HepG2 (cell line): ENCODE measurements at regions of chr11 and their contacts with region 1.

Region 1: GRCh38 chr11:65615229-65615941 is at the start of gene PCNX3:
- DNase-seq: peak; percentile 100
- ATAC-seq: peak; percentile 72
- H3K4me3 ChIP-seq: peak within 1 kb of the TSS; percentile 90 to 97 (median 94)
- H3K27ac ChIP-seq: peak within 1 kb of the TSS; percentile 92
- H3K4me1 ChIP-seq: peaks cover 41% of the 10 kb centered on the region
- H3K27me3 ChIP-seq: no peaks in the 10 kb centered on the region; a peak in 1 of 5 replicates
- CTCF ChIP-seq: 0 out of 2 replicates have a peak, but pooled peaks have one; percentile 9
- EP300 ChIP-seq: 0 out of 4 replicates have a peak, but pooled peaks of 1 of the 2 experiments have one; percentile 27
- POLR2A ChIP-seq: peak in 1 of 2 experiments; percentile 44; a peak in 2 of 4 replicates
- RAD21 ChIP-seq: no peak
- total RNA-seq, gene PCNX3: 14.5 and 23.0 TPM in 2 replicates

Region 2: DNA sequence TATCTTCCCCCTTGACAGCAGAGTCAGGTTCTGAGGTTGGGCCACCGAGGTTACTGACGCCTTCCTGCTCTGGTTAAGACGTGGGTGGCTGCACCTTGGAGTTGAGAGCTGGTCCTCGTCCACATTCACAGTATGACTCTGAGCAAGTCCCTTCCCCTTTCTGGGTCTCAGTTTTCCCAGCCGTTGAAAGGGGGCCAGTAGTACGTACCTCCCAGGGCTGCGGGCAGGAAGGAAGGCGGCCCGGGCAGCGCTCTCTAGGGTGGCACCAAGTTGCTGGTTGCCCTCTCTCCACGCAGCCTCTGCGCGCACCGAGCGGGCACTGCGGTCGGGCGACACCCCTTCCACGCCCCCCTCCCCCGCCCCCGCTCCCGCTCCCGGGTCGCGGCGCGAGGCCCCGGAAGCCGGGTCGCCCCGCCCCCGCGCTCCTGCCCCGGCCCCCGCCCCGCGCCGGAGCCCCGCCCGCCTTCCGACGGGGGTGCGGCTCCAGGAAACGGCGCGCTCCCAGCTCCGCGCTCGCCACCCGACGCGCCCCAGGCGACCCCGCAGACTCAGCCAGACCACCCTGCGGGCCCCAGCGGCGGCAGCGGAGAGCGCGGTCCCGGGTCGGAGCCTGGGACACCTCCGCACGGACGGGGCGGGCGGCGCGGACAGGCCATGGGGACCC is 39.7 kb before region 1 on chr11 and contains the start of gene EHBP1L1:
- CTCF ChIA-PET with region 1: no interaction called
- POLR2A ChIA-PET with region 1: interaction called, 9 read pairs
- in situ Hi-C with region 1: loop called (anchors 5 kb)
- intact Hi-C with region 1: no loop called
- DNase-seq: no peak
- ATAC-seq: peak; percentile 9
- H3K4me3 ChIP-seq: peak within 1 kb of the TSS; percentile 69 to 77 (median 73)
- H3K27ac ChIP-seq: no peak within 1 kb of the TSS
- H3K4me1 ChIP-seq: peaks cover 54% of the 10 kb centered on the region
- H3K27me3 ChIP-seq: no peaks in the 10 kb centered on the region; a peak in 1 of 5 replicates
- CTCF ChIP-seq: no peak
- EP300 ChIP-seq: no peak
- POLR2A ChIP-seq: no peak
- RAD21 ChIP-seq: no peak
- total RNA-seq, gene EHBP1L1: 5.4 and 10.6 TPM in 2 replicates

Region 3: GRCh38 chr11:65625628-65626342 is 10.4 kb after region 1 on chr11:
- CTCF ChIA-PET with region 1: no interaction called
- POLR2A ChIA-PET with region 1: interaction called, 19 read pairs
- in situ Hi-C with region 1: no loop called
- intact Hi-C with region 1: no loop called
- DNase-seq: no peak
- ATAC-seq: peak; percentile 71
- H3K4me3 ChIP-seq: no peak overlapping the region
- H3K27ac ChIP-seq: no peak overlapping the region
- H3K4me1 ChIP-seq: peaks cover 4% of the 10 kb centered on the region; the same call in 1 of the 2 replicates
- H3K27me3 ChIP-seq: no peaks in the 10 kb centered on the region
- CTCF ChIP-seq: peak; percentile 76
- EP300 ChIP-seq: no peak
- POLR2A ChIP-seq: no peak
- RAD21 ChIP-seq: peak; percentile 43; the same call in 1 of the 2 replicates

Region 4: DNA sequence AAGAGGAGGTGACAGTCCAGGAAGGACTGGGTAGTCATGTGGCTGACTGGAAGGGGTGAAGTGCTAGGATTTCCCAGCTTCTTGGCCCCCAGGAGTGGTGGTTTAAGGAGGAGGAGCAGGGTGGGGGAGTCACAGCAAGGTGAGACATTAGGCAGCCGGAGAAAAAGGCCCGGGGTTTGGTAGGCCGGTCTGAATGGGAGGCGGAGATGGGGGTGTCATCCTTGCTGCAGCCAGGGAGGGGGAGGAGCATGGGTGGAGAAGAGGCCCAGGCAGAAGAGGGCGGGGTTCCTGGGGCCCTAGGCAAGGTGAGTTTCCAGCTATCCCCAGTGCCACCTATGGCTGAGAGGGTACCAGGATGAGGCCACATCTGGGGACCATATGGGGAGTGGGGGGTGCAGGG is 28.6 kb after region 1 on chr11:
- CTCF ChIA-PET with region 1: no interaction called
- POLR2A ChIA-PET with region 1: interaction called, 44 read pairs
- in situ Hi-C with region 1: no loop called
- intact Hi-C with region 1: no loop called
- DNase-seq: no peak
- ATAC-seq: peak; percentile 6; the same call in 2 of the 3 replicates
- H3K4me3 ChIP-seq: no peak overlapping the region
- H3K27ac ChIP-seq: no peak overlapping the region
- H3K4me1 ChIP-seq: peaks cover 23% of the 10 kb centered on the region
- H3K27me3 ChIP-seq: no peaks in the 10 kb centered on the region
- CTCF ChIP-seq: no peak
- EP300 ChIP-seq: no peak
- POLR2A ChIP-seq: no peak
- RAD21 ChIP-seq: no peak

Region 5: DNA sequence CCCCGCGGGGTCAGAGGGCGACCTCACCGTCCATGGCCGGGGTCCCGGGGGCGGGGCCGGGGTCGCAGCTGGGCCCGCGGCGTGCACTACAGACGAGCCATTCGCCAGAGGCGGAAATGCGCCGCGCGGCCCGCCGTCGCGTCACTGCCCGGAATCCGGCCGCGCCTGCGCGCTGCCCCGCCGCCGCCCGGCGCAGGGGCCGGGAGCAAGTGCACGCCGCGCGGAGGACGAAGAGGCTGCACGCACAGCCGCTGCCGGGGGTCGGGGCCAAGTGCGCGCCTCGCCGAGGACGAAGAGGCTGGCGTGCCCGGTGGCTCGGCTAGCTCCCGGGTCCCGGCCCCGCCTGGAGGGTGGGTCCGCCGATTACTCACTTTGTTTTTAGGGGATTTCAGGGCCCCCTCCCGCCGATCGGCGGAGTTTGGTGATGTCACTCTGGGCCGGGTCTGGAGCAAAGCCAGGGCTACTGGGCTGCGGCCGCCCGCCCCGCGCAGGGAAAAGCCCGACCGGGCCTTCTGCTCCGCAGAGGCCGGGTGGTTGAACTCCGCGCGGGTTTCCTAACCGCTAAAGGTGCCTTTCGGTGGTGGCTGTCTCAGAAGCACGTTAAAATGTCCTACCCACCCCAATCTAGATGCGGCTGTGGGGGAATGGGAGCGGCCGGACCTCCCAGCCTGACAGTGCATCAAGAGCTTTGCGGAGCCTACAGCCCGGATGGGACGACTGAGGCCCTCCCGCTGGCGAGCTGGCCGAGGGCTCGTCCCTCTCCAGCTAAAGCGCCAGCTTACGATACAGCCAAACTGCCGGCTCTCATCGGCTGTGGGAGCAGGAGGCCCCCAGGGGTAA is 47.6 kb after region 1 on chr11 and contains the start of gene RELA:
- CTCF ChIA-PET with region 1: no interaction called
- POLR2A ChIA-PET with region 1: interaction called, 17 read pairs
- in situ Hi-C with region 1: no loop called
- intact Hi-C with region 1: no loop called
- DNase-seq: peak; percentile 81
- ATAC-seq: peak; percentile 84
- H3K4me3 ChIP-seq: peak within 1 kb of the TSS; percentile 81 to 94 (median 88)
- H3K27ac ChIP-seq: peak within 1 kb of the TSS; percentile 86
- H3K4me1 ChIP-seq: peaks cover 10% of the 10 kb centered on the region
- H3K27me3 ChIP-seq: no peaks in the 10 kb centered on the region; a peak in 1 of 5 replicates
- CTCF ChIP-seq: no peak
- EP300 ChIP-seq: no peak
- POLR2A ChIP-seq: peak; percentile 53 to 81
- RAD21 ChIP-seq: no peak; the same call in 1 of the 2 replicates
- total RNA-seq, gene RELA: 18.7 and 21.4 TPM in 2 replicates

Region 6: DNA sequence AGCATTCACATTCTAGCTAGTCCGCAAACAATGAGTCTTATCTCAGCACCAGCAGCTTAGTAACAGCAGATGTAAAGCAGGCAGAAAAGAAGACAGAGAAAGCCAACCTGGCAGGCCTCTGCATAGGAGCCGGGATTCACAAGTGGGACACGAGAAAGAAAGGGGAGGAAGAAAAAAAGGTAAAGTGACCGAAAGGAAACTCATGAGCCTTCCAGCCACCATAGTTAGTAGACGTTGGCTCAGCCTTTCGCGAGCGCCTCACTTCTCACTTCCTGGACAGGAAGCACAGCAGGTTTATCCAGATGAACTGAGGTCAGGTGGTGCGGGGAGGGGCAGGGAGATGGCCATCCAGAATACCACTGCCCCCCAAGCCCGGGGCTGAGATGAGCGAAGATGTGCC is 77.0 kb after region 1 on chr11:
- CTCF ChIA-PET with region 1: no interaction called
- POLR2A ChIA-PET with region 1: no interaction called
- in situ Hi-C with region 1: no loop called
- intact Hi-C with region 1: no loop called
- DNase-seq: no peak
- ATAC-seq: no peak
- H3K4me3 ChIP-seq: no peak overlapping the region
- H3K27ac ChIP-seq: no peak overlapping the region
- H3K4me1 ChIP-seq: peaks cover 15% of the 10 kb centered on the region
- H3K27me3 ChIP-seq: peaks cover 0 to 11% of the 10 kb centered on the region in 2 experiments; a peak in 2 of 5 replicates
- CTCF ChIP-seq: no peak
- EP300 ChIP-seq: no peak
- POLR2A ChIP-seq: no peak
- RAD21 ChIP-seq: no peak

Region 7: DNA sequence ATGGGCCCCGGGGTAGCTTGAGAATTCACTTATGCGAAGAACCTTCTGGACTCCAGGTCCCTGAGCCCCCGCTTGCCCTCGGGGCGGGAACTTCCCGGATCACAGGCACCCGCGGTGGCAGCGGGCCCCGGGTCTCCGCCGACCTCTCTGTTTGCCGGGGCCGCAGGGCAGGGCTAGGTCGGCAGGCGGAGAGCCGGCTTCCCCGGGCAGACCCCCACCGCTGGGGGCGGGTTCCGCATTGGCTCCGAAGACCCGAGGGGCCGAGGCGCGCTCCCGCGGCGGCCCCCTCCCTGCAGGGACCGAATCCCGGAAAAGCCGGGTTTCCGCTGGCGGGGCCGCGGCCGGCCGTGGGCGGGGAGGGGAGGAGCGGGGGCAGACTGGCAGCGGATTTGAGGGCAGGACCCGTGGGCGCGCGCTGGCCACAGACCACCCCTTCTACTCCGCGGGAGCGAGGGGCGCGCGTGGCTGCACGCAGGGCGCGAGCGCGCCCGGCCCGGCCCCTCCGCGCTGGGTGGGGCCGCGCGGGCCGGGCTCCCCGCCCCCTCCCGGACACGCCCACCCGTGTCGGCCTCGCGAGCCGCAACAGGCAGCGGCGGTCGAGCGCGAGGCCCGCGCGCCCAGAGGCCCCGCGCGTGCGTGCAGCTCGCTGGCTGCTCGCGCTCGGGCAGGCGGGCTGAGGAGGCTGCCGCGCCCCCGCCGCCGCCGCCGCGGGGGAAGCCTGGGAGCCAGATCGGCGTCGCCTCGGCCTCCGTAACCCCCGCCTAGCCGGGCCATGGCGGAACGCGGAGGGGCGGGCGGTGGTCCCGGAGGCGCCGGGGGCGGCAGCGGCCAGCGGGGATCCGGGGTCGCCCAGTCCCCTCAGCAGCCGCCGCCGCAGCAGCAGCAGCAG is 454.6 kb after region 1 on chr11 and contains the start of gene PACS1:
- CTCF ChIA-PET with region 1: no interaction called
- POLR2A ChIA-PET with region 1: no interaction called
- in situ Hi-C with region 1: no loop called
- intact Hi-C with region 1: no loop called
- DNase-seq: peak; percentile 25
- ATAC-seq: peak; percentile 48
- H3K4me3 ChIP-seq: peak within 1 kb of the TSS; percentile 82 to 88 (median 86)
- H3K27ac ChIP-seq: peak within 1 kb of the TSS; percentile 59
- H3K4me1 ChIP-seq: peaks cover 59% of the 10 kb centered on the region
- H3K27me3 ChIP-seq: no peaks in the 10 kb centered on the region
- CTCF ChIP-seq: no peak
- EP300 ChIP-seq: no peak
- POLR2A ChIP-seq: peak in 1 of 2 experiments; percentile 46; a peak in 1 of 4 replicates
- RAD21 ChIP-seq: no peak; the same call in none of the 2 replicates
- total RNA-seq, gene PACS1: 7.6 and 12.2 TPM in 2 replicates